Sigmoid colon (tissue), 7 donors: ENCODE measurements at regions of chr17 and their contacts with region 1.

Region 1: GRCh38 chr17:77963441-77963840 is 4.9 kb downstream of the TNRC6C start:
- DNase-seq: peak; percentile 73
- H3K4me3 ChIP-seq: no peak overlapping the region
- H3K27ac ChIP-seq: peak overlapping the region in 3 of 4 donors; percentile 17 to 44 (median 38)
- H3K4me1 ChIP-seq: peaks cover 0 to 67% (median 48%) of the 10 kb centered on the region in 4 donors
- H3K27me3 ChIP-seq: no peaks in the 10 kb centered on the region
- CTCF ChIP-seq: no peak
- EP300 ChIP-seq: no peak
- POLR2A ChIP-seq: no peak

Region 2: DNA sequence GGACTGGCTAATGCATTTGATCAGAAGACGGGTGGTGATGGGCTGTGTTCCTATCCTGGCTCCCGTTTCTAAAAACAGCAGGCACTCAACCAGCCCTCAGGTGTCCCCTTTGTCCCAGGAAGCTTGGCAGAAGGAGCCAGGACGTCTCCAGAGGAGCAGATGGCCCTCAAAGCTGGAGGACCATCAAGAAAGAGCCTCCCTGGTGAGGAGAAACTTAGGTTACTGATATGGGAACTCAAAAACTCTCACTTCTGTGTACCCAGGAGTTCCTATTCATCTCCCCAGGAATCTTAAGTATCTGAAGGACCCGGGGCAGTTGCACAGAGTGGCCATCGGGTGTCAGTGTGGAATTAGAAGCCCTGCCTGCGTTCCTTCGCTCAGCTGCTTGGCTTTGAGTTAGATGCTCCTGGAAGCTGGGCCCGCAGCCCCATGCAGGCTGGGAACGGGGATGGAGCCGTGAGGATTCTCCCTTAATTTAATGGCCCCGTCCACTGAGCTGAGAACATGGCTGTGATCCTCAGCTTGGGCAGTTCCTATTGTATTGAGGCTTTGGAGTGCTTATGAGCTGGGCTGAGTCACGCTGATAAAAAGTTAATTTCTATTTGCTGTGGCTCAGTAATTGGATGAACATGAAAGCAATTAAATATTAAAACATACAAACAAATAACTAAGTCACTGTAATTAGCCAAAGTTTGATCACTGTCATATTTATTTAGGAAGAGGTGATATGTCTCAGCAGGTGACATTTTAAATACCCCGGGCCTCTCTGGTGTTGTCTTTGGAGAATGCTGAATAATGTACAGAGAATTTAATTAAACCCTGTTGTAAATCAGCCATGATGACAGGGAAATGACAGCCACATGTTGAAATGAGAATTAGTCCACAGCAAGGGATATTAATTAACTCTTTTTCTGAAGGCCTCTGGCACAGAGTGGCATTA is 420.6 kb before region 1 on chr17:
- intact Hi-C with region 1: loop called (anchors 5 kb)
- DNase-seq: peak; percentile 93
- H3K4me3 ChIP-seq: no peak overlapping the region
- H3K27ac ChIP-seq: no peak overlapping the region
- H3K4me1 ChIP-seq: peaks cover 0 to 25% (median 10%) of the 10 kb centered on the region in 4 donors
- H3K27me3 ChIP-seq: no peaks in the 10 kb centered on the region
- CTCF ChIP-seq: peak; percentile 90 to 93 (median 92)
- EP300 ChIP-seq: no peak
- POLR2A ChIP-seq: no peak